ENCODE measurements at regions of chr5 and their contacts with region 1.

Region 1: DNA sequence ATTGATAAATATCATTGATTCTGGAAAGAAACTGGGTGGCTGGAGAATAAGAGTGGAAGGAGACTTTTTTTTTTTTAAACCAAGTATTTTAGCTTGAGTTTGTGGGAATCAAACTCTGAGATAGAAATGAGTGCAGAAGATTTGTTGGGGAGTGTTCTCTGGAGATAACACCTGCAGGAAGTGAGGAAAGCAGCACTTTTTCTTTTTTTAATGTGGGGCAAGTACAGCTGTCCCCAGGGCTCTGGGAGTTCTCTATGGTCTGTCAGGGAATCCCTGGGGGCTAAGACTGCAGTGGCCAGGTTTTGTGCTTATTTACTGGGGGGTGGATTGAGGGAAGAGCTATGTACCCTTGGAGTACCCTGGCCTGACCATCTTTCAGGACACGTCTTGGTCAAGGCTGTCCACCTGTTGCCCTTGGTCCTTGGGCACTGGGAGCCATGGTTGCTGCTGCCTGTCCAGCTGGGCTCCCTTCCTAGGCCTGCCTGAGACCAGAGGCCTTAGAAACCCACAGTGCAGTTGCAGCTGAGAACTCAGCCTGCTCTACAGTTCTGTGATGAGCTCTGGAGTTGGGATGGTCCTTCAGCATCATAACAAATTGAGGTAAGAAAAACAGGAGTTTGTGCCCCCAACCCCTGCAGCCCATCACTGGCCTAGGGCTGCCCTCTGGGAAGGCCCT is 85.8 kb downstream of the PHAX start:
- DNase-seq: peak; percentile 15
- ATAC-seq: peak; percentile 68
- H3K4me3 ChIP-seq: no peak overlapping the region
- H3K27ac ChIP-seq: no peak overlapping the region
- H3K4me1 ChIP-seq: peaks cover 9% of the 10 kb centered on the region
- H3K27me3 ChIP-seq: no peaks in the 10 kb centered on the region
- CTCF ChIP-seq: no peak
- EP300 ChIP-seq: peak in 1 of 2 experiments; percentile 32; a peak in 1 of 4 replicates
- POLR2A ChIP-seq: no peak
- RAD21 ChIP-seq: no peak

Region 2: DNA sequence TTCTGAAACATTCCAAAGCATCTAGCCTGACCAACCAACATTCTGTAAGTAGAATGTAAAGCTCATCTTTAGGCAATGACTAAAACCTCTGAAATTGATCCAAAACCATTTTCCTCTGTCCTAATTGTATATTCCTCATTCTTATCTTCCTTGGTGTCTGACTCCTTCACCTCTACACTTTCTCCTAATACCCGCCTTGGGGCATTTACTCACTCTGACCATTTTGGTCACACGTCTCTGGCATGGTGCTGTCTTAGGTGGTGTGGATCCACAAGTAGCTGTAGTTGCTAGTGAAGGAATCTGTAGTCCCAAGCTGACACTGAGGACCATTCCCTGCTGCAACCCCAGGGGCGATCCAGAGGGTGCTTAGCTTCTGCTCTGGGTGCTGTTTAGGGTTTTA is 49.6 kb after region 1 on chr5:
- CTCF ChIA-PET with region 1: no interaction called
- POLR2A ChIA-PET with region 1: interaction called, 6 read pairs
- RAD21 ChIA-PET with region 1: interaction called, 11 read pairs
- SMC1A ChIA-PET with region 1: interaction called, 45 read pairs
- in situ Hi-C with region 1: no loop called
- intact Hi-C with region 1: no loop called
- DNase-seq: no peak
- ATAC-seq: peak; percentile 28; the same call in 2 of the 3 replicates
- H3K4me3 ChIP-seq: no peak overlapping the region
- H3K27ac ChIP-seq: no peak overlapping the region
- H3K4me1 ChIP-seq: 0 out of 2 replicates have a peak, but pooled peaks cover 6% of the 10 kb centered on the region
- H3K27me3 ChIP-seq: no peaks in the 10 kb centered on the region
- CTCF ChIP-seq: no peak
- EP300 ChIP-seq: no peak
- POLR2A ChIP-seq: no peak
- RAD21 ChIP-seq: no peak

Region 3: GRCh38 chr5:126753227-126753626 is 66.6 kb after region 1 on chr5:
- CTCF ChIA-PET with region 1: interaction called, 4 read pairs
- POLR2A ChIA-PET with region 1: interaction called, 4 read pairs
- RAD21 ChIA-PET with region 1: interaction called, 3 read pairs
- SMC1A ChIA-PET with region 1: interaction called, 14 read pairs
- in situ Hi-C with region 1: no loop called
- intact Hi-C with region 1: no loop called
- DNase-seq: no peak
- ATAC-seq: no peak
- H3K4me3 ChIP-seq: no peak overlapping the region
- H3K27ac ChIP-seq: no peak overlapping the region
- H3K4me1 ChIP-seq: peaks cover 14% of the 10 kb centered on the region
- H3K27me3 ChIP-seq: no peaks in the 10 kb centered on the region
- CTCF ChIP-seq: no peak
- EP300 ChIP-seq: no peak
- POLR2A ChIP-seq: no peak
- RAD21 ChIP-seq: no peak

Region 4: GRCh38 chr5:126763371-126763770 is 76.8 kb after region 1 on chr5:
- CTCF ChIA-PET with region 1: interaction called, 4 read pairs
- POLR2A ChIA-PET with region 1: interaction called, 4 read pairs
- RAD21 ChIA-PET with region 1: interaction called, 7 read pairs
- SMC1A ChIA-PET with region 1: interaction called, 14 read pairs
- in situ Hi-C with region 1: no loop called
- intact Hi-C with region 1: loop called (anchors 2 kb)
- DNase-seq: no peak
- ATAC-seq: no peak
- H3K4me3 ChIP-seq: no peak overlapping the region
- H3K27ac ChIP-seq: peak overlapping the region; percentile 86
- H3K4me1 ChIP-seq: peaks cover 24% of the 10 kb centered on the region
- H3K27me3 ChIP-seq: no peaks in the 10 kb centered on the region
- CTCF ChIP-seq: no peak
- EP300 ChIP-seq: no peak
- POLR2A ChIP-seq: no peak
- RAD21 ChIP-seq: no peak

Region 5: GRCh38 chr5:126998201-126998631 is 311.6 kb after region 1 on chr5:
- CTCF ChIA-PET with region 1: no interaction called
- POLR2A ChIA-PET with region 1: no interaction called
- RAD21 ChIA-PET with region 1: no interaction called
- SMC1A ChIA-PET with region 1: no interaction called
- in situ Hi-C with region 1: no loop called
- intact Hi-C with region 1: no loop called
- DNase-seq: peak; percentile 35
- ATAC-seq: peak; percentile 88
- H3K4me3 ChIP-seq: no peak overlapping the region
- H3K27ac ChIP-seq: peak overlapping the region; percentile 46
- H3K4me1 ChIP-seq: peaks cover 5% of the 10 kb centered on the region
- H3K27me3 ChIP-seq: no peaks in the 10 kb centered on the region
- CTCF ChIP-seq: peak in 1 of 3 experiments; percentile 27; a peak in 2 of 6 replicates
- EP300 ChIP-seq: no peak
- POLR2A ChIP-seq: no peak
- RAD21 ChIP-seq: peak; percentile 56